Activated naive CD4-positive, alpha-beta T cell treated with anti-CD3 and anti-CD28 coated beads, Interleukin-2, amount 10 ng/mL, durations not matched to agents 7 days and 5 days (primary cell): ENCODE measurements at regions of chr1 and their contacts with region 1.

Region 1: DNA sequence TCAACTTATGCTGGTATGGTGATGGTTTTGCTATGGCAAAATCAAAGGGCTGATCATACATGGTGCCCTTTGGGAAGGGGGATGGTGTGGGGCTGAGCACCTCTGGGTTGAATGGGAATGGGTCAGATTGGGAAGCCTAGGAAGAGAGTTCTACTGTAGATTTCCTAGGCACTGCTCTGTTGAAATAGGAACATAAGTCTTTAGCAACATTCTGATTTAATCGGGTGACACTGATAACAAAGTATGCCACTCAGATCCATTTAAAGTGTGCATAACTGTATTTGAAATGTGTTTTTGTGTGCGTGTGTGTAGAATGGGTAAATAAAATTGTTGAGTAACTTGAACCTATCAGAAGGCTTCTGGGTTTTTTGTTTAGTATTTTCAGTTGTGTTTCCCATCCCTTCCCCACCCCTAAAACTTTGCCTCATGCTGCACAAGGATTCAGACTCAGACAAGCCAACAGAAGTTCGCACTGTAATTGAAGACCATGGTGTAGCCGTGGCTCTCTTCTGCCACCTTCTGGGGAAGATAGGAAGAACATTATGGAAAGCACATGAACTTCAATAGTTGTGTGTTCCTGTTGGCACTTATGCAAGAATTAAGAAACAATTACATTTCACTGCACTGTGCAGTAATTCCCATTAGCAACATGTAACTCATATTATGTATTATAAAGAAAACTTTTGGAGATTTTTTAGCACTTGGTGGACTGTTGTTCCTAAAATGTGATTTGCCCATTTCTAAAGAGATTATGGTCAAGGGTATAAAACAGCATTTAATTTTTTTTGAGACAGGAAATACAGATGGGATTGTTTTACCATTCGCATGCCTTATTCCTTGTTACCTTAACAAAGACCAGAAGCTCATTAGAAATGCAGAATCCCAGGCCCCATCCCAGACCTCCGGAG is 10.9 kb upstream of the C4BPB start:
- DNase-seq: peak; percentile 78
- H3K4me3 Mint-ChIP-seq: no peak overlapping the region
- H3K27ac Mint-ChIP-seq: no peak overlapping the region
- H3K4me1 Mint-ChIP-seq: peaks cover 5% of the 10 kb centered on the region
- H3K27me3 Mint-ChIP-seq: peaks cover 15% of the 10 kb centered on the region

Region 2: DNA sequence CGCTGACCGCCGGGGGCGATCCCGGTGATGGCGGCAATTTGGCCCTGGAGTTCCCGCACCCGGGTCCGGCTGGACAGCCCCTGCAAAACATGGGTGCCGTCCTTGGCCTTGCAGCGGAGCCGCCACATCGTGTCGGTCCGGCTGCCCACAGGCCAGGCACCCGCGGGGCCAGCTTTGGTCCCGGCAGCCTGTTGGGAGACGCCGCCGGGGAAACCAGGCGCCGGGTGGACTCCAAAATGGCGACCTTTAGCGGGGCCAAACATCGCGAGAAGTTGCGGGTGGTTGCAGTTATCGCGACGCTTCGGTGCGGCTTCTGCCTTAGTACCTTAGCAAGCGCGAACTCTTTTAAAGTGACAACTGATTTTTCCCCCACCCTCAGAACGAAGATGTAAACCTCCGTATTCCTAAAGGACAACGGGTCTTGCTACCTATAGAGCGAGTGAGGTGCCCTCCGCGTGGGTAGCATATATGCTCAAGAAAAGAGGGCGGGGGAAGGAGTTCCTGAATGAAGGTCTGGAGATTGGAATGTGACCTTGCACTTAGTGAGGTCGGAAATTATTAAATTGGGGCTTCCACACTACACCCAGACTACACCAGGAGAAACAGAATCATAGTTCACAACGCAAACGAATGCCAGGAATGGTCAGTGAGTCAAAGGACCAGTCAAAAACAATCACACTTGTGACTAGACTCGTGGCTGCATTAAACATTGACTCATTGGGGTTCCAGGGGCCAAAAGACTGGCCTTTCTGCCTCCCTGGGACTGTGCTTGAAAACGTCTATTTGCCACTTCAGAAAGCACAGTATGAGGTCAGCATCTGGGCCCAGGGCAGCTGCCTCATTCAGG is 26.7 kb before region 1 on chr1 and contains the start of gene YOD1:
- CTCF ChIA-PET with region 1: interaction called, 20 read pairs
- DNase-seq: peak; percentile 94
- H3K4me3 Mint-ChIP-seq: peak within 1 kb of the TSS; percentile 100
- H3K27ac Mint-ChIP-seq: peak within 1 kb of the TSS; percentile 98
- H3K4me1 Mint-ChIP-seq: peaks cover 69% of the 10 kb centered on the region
- H3K27me3 Mint-ChIP-seq: peaks cover 21% of the 10 kb centered on the region